K562 (cell line): ENCODE measurements at regions of chr6 and their contacts with region 1.

Region 1: DNA sequence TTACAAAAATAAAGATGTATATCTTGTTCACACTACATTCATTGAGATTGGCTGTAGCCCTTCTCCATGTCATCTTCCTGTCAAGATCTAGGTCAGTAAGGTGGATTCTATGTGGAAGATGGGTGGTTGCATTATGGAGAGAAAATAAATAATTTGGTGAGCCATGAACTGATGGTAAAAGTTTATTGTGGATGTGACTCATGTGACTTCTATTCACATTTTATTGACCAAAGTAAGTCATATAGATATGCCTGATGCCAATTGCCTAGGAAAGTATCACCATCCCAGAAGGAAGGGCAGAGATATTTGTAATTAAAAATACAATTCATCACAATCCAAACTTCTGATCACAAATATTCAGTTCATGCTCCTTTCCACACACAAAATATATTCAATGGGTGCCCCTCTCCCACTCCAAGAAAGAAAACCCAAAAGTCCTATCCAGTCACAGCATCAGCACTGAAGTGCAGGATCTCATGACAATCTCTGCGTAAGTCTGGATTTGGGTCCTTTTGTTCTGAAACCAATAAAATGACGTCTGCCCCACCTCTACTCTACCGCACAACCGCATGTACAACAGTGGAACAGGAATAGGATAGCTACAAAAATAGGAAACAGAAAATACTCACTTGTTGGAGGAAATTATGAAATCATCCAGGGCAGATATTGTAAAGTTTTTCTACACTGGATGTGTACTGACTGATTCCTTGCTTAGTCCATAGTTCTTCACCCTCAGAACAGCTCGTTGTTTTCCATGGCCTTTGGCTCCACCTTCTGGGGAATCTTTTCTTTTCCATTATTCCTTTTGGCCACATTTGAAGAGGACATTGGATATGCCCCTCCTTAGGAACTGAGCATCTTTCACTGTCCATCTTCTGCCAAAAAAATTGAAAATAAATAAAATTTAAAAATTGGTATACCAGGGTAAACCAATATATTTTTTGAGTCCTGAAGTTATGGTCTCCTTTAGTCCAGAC is 16.1 kb upstream of the SLC17A3 start:
- DNase-seq: peak; percentile 16 to 56 (median 22)
- ATAC-seq: peak; percentile 87
- H3K4me3 ChIP-seq: no peak overlapping the region
- H3K27ac ChIP-seq: no peak overlapping the region
- H3K4me1 ChIP-seq: no peaks in the 10 kb centered on the region
- H3K27me3 ChIP-seq: no peaks in the 10 kb centered on the region
- CTCF ChIP-seq: peak; percentile 55 to 83 (median 64)
- EP300 ChIP-seq: no peak
- POLR2A ChIP-seq: no peak
- RAD21 ChIP-seq: peak; percentile 95 to 96

Region 2: DNA sequence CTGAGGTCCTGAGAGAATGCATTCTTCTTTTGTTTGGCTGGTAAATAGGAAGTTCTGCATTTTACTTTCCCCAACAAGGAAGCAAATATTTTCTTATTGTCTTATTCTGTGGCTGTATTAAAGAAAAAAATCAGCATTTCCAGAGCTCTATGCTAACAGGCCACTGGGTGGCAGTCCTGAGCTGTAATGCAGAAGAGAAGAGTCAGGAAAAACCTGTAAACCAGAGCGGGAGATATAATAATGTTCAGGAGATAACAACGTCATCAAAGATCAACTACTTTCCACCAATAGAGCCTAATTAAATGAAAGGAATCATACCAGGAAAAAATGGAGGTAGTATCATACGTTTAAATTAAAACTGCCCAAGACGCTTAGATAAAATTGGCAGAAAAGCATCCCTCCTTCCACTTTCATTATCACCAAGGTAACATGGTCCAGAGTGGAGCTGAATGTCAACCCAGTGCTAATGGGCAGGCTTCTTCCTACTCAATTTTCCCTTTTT is 666.6 kb before region 1 on chr6:
- CTCF ChIA-PET with region 1: interaction called, 3 read pairs
- POLR2A ChIA-PET with region 1: interaction called, 3 read pairs
- in situ Hi-C with region 1: no loop called
- intact Hi-C with region 1: loop called (anchors 1 kb)
- DNase-seq: peak; percentile 57 to 73 (median 59)
- ATAC-seq: peak; percentile 87
- H3K4me3 ChIP-seq: no peak overlapping the region
- H3K27ac ChIP-seq: no peak overlapping the region
- H3K4me1 ChIP-seq: peaks cover 0 to under 1% of the 10 kb centered on the region in 2 experiments; a peak in 1 of 5 replicates
- H3K27me3 ChIP-seq: peaks cover 0 to 5% of the 10 kb centered on the region in 2 experiments; a peak in 2 of 5 replicates
- CTCF ChIP-seq: peak; percentile 82 to 92 (median 84)
- EP300 ChIP-seq: no peak
- POLR2A ChIP-seq: no peak
- RAD21 ChIP-seq: peak; percentile 80 to 87

Region 3: DNA sequence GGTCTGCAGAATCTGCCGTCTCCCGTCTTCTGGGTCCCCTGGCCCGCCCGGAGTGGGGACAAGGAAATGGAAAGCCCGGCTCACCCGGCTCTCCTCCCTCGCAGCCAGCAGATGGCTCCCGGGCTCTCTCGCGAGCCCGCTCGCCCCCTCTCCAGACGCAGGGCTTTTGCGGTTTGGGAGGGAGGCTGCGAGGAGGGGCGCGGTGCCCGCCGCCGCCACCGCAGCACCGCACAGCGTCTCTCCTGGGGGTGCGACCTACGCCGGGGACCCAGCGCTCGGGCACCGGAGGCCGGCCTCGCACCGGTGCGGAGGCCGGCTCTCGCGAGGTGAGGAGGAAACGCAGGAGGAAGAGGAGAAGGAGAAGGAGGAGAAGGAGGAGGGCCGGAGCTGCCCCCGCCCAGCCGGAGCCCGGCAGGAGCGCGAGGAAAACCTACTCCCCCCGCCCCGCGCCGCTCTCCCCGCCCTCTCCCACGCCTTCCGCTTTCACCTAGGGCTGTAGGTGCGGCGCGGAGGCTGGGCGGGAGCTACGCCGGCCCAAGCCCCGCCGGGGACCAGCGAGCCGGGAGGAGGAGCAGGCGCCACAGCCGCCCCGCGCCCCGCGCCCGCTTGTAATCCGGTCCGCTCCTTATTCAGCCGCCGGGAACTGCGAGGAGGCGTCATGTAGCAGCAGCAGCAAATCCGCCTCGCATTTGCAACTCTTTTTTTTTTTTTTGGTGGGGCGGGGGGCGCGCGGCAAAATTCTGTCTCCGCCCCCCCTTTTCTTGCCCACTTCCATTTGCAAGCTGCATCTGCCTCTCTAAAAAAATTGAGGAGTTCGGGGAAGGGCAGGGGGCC is 611.0 kb before region 1 on chr6 and contains the start of gene CARMIL1:
- CTCF ChIA-PET with region 1: no interaction called
- POLR2A ChIA-PET with region 1: no interaction called
- in situ Hi-C with region 1: no loop called
- intact Hi-C with region 1: loop called (anchors 2 kb)
- DNase-seq: peak; percentile 80 to 92 (median 90)
- ATAC-seq: peak; percentile 97
- H3K4me3 ChIP-seq: peak within 1 kb of the TSS; percentile 60
- H3K27ac ChIP-seq: no peak within 1 kb of the TSS
- H3K4me1 ChIP-seq: peaks cover 2 to 17% of the 10 kb centered on the region in 2 experiments; a peak in 2 of 5 replicates
- H3K27me3 ChIP-seq: peaks cover 4 to 26% of the 10 kb centered on the region in 2 experiments; a peak in 4 of 5 replicates
- CTCF ChIP-seq: peak; percentile 70 to 85 (median 70)
- EP300 ChIP-seq: no peak
- POLR2A ChIP-seq: no peak
- RAD21 ChIP-seq: peak; percentile 78
- polyA plus RNA-seq, gene CARMIL1: 0.08 TPM in 1 of 2 experiments, not detected in the other

Region 4: DNA sequence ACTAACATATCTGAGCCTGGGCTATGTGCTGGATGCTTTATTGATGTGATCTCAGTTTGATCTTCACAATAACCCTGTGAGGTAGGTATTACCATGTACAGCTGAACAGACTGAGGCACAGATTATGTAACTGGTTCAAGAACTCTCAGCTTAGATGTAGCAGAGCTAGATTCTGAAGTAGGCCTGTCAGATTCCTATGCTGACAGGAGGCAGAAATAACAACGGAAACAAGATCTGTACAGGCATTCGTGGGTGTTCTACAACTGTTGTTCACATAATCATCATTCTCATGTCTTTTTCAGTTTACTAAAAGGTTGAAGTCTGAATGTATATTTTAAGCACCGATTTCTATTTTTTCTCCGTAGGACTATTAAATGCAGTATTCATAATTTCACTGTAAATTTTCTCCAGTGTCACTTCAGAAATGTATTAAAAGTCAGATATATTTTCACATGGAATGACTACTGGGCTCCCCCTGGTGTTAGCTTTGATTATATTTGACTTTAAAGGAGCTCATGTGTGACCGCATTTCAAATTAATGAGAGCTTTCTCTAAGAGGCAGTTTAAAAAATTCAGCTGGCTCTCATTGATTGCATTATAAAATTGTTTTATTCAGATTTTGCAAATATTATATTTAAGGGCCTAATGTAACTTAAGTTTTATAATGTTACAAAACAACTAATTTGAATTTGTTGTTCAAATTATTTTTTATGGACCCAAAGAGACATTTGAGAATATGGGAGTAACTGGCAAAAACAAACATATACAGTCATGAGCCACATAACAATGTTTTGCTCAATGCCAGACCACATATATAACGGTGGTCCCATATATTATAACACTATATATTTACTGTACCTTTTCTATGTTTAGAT is 172.1 kb before region 1 on chr6:
- CTCF ChIA-PET with region 1: no interaction called
- POLR2A ChIA-PET with region 1: no interaction called
- in situ Hi-C with region 1: no loop called
- intact Hi-C with region 1: loop called (anchors 2 kb)
- DNase-seq: peak; percentile 35 to 54 (median 48)
- ATAC-seq: peak; percentile 59; the same call in 2 of the 3 replicates
- H3K4me3 ChIP-seq: no peak overlapping the region
- H3K27ac ChIP-seq: no peak overlapping the region
- H3K4me1 ChIP-seq: no peaks in the 10 kb centered on the region
- H3K27me3 ChIP-seq: peaks cover 2 to 7% of the 10 kb centered on the region in 2 experiments; a peak in 2 of 5 replicates
- CTCF ChIP-seq: peak; percentile 52 to 75 (median 53); a peak in 5 of 6 replicates
- EP300 ChIP-seq: no peak
- POLR2A ChIP-seq: no peak
- RAD21 ChIP-seq: peak; percentile 74 to 79

Region 5: DNA sequence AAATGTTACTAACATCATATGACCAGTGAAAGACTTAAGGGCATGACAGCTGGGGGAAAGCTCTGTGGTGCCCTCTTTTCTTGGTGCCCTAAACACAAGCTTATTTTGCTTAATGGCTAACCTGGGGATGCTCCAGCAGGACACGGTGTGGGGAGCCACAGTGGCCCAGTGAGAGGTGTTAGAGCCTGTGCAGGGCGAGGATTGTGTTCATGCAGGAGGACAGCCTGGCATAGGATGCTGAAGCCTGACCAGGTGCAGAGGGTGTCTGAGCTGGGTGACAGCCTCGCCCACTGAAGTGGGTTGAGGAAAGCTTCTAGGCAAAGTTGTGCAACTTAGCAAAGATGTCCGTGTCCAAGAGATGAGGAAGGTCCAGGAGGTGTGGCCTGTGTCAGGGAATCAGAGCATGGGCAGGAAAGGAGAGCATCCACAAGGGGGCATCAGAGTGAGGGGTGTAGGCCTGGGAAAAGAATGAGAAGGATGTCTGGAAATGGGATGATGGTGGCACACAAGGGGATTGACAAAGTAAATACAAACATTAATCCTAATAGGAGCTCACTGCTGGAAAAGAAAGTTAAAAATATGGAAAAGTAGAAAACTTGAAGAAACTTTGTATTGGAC is 101.8 kb before region 1 on chr6:
- CTCF ChIA-PET with region 1: interaction called, 12 read pairs
- POLR2A ChIA-PET with region 1: no interaction called
- in situ Hi-C with region 1: no loop called
- intact Hi-C with region 1: loop called (anchors 5 kb)
- DNase-seq: peak; percentile 51 to 73 (median 61)
- ATAC-seq: peak; percentile 99
- H3K4me3 ChIP-seq: no peak overlapping the region
- H3K27ac ChIP-seq: no peak overlapping the region; the same call in 2 of the 3 replicates
- H3K4me1 ChIP-seq: no peaks in the 10 kb centered on the region
- H3K27me3 ChIP-seq: no peaks in the 10 kb centered on the region; a peak in 1 of 5 replicates
- CTCF ChIP-seq: peak; percentile 77 to 89 (median 77)
- EP300 ChIP-seq: no peak
- POLR2A ChIP-seq: no peak
- RAD21 ChIP-seq: peak; percentile 83 to 87

Region 6: GRCh38 chr6:25866011-25866410 is 24.2 kb before region 1 on chr6:
- CTCF ChIA-PET with region 1: no interaction called
- POLR2A ChIA-PET with region 1: no interaction called
- in situ Hi-C with region 1: no loop called
- intact Hi-C with region 1: no loop called
- DNase-seq: peak in 2 of 4 experiments; percentile 14 to 30
- ATAC-seq: peak; percentile 83
- H3K4me3 ChIP-seq: no peak overlapping the region
- H3K27ac ChIP-seq: 0 out of 3 replicates have a peak overlapping the region, but pooled peaks have one; percentile 8
- H3K4me1 ChIP-seq: peaks cover 0 to 14% of the 10 kb centered on the region in 2 experiments; a peak in 3 of 5 replicates
- H3K27me3 ChIP-seq: no peaks in the 10 kb centered on the region
- CTCF ChIP-seq: no peak
- EP300 ChIP-seq: peak; percentile 73
- POLR2A ChIP-seq: no peak
- RAD21 ChIP-seq: no peak

Region 7: DNA sequence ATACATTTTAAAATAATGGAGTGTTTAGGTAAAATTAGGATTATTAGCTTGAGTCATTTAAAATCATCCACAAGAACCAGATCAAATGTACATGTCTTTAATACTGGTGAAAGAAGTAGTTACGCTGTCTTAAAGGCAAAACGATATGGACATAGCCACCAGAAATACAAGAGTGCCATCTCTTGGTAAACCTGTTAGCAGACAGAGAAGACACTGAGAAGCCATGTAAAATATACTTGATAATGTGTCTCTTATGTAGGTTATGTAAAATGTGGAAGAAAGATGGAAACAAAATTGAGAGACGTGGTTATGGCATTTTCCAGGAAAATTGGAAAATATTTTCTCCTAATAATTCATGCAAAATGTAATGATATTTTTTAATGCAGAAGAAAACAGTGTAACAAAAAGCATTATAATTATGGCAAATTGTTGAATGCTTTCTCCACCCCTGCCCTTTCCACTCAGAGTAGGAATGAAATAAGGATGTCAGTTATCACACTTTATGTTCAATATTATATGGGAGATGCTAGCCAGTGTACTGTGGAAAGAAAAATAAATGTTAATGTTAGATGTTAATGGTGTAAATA is 52.5 kb after region 1 on chr6:
- CTCF ChIA-PET with region 1: no interaction called
- POLR2A ChIA-PET with region 1: no interaction called
- in situ Hi-C with region 1: no loop called
- intact Hi-C with region 1: loop called (anchors 2 kb)
- DNase-seq: peak in 2 of 4 experiments; percentile 33 to 58
- ATAC-seq: peak; percentile 95
- H3K4me3 ChIP-seq: no peak overlapping the region
- H3K27ac ChIP-seq: no peak overlapping the region
- H3K4me1 ChIP-seq: no peaks in the 10 kb centered on the region
- H3K27me3 ChIP-seq: no peaks in the 10 kb centered on the region; a peak in 1 of 5 replicates
- CTCF ChIP-seq: peak; percentile 63 to 91 (median 64); a peak in 5 of 6 replicates
- EP300 ChIP-seq: no peak
- POLR2A ChIP-seq: no peak
- RAD21 ChIP-seq: peak; percentile 97 to 99